Activated T-helper 1 cell treated with anti-CD3 and anti-CD28 coated beads, Interleukin-12 subunit alpha, Interleukin-12 subunit beta, Interleukin-2, Interleukin-4 antibody, amounts not matched to agents 30 ng/mL and 10 ng/mL and 1 ng/mL, durations not matched to agents 14 hours and 24 hours and 36 hours (primary cell): ENCODE measurements at regions of chr11 and their contacts with region 1.

Region 1: GRCh38 chr11:7442588-7443215 is 42.6 kb upstream of the OLFML1 start:
- DNase-seq: peak; percentile 40
- H3K4me3 Mint-ChIP-seq: no peak overlapping the region
- H3K27ac Mint-ChIP-seq: no peak overlapping the region
- H3K4me1 Mint-ChIP-seq: no peaks in the 10 kb centered on the region
- H3K27me3 Mint-ChIP-seq: no peaks in the 10 kb centered on the region

Region 2: DNA sequence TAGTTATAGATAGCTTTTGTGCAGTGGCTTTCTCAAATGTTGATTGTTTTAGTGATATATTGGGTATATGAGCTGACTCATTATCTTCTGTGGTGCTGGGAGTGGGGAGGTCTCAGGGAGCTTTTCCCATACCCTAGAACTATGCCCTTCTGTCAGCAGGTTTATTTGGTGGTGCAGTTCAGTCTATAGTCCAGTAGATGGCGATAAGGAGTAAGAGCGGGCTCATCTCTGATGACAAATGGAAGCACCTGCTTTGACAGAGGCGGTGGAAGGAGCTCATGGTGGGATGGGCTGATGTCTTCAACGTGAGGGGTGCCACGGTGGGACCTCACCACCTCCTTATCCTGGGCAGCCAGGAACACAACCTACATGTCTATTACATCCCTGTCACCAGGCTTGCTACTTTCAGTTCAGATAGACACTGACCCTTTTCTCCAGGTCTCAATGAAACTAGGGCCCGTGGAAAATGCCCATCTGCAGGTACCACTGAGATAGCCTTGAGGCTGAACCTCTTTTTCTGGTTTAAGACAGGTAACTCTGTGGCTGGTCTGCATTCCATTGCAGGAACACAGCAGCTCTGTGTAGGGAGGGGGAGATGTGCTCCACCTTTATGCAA is 630.2 kb before region 1 on chr11:
- intact Hi-C with region 1: loop called (anchors 5 kb)
- DNase-seq: peak; percentile 15
- H3K4me3 Mint-ChIP-seq: no peak overlapping the region
- H3K27ac Mint-ChIP-seq: no peak overlapping the region
- H3K4me1 Mint-ChIP-seq: no peaks in the 10 kb centered on the region
- H3K27me3 Mint-ChIP-seq: peaks cover 19% of the 10 kb centered on the region

Region 3: GRCh38 chr11:7098235-7098832 is 344.4 kb before region 1 on chr11:
- intact Hi-C with region 1: loop called (anchors 1 kb)
- DNase-seq: no peak
- H3K4me3 Mint-ChIP-seq: no peak overlapping the region
- H3K27ac Mint-ChIP-seq: no peak overlapping the region
- H3K4me1 Mint-ChIP-seq: no peaks in the 10 kb centered on the region
- H3K27me3 Mint-ChIP-seq: peaks cover 16% of the 10 kb centered on the region

Region 4: DNA sequence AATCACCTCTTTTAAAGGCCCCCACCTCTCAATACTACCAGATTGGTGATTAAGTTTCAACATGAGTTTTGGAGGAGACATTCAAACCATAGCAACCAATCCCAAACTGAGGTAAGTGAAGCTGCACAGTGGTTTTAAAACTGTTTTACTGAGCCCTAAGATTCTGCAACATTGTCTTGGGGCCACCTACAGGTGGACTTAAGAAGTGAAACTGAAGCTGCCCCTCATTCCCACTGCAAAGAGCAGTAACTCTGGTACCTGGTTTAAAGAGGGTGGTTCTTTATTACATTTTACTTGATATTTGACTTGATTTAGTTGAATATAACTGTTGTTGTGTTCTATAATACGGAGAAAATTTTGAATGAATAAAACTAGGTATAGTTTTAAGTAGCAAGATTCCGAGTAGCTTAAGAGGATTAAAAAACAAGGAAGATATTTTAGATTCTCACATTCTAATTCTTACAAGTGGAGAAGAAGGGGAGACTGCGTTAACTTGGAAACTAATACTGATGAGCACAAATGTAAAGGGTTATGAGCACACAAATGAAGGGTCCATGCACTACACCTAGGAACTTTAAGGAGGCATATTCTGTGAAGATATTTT is 164.3 kb before region 1 on chr11:
- intact Hi-C with region 1: loop called (anchors 10 kb)
- DNase-seq: no peak
- H3K4me3 Mint-ChIP-seq: no peak overlapping the region
- H3K27ac Mint-ChIP-seq: no peak overlapping the region
- H3K4me1 Mint-ChIP-seq: no peaks in the 10 kb centered on the region
- H3K27me3 Mint-ChIP-seq: no peaks in the 10 kb centered on the region

Region 5: GRCh38 chr11:7332962-7333361 is 109.7 kb before region 1 on chr11:
- intact Hi-C with region 1: no loop called
- DNase-seq: no peak
- H3K4me3 Mint-ChIP-seq: no peak overlapping the region
- H3K27ac Mint-ChIP-seq: no peak overlapping the region
- H3K4me1 Mint-ChIP-seq: no peaks in the 10 kb centered on the region
- H3K27me3 Mint-ChIP-seq: peaks cover 4% of the 10 kb centered on the region